ENCODE measurements at regions of chr17 and their contacts with region 1.

Region 1: GRCh38 chr17:9158544-9159452 is 137.5 kb downstream of the NTN1 start:
- DNase-seq: no peak
- H3K4me3 ChIP-seq: no peak overlapping the region
- H3K27ac ChIP-seq: no peak overlapping the region
- H3K4me1 ChIP-seq: no peaks in the 10 kb centered on the region
- H3K27me3 ChIP-seq: no peaks in the 10 kb centered on the region
- CTCF ChIP-seq: no peak

Region 2: DNA sequence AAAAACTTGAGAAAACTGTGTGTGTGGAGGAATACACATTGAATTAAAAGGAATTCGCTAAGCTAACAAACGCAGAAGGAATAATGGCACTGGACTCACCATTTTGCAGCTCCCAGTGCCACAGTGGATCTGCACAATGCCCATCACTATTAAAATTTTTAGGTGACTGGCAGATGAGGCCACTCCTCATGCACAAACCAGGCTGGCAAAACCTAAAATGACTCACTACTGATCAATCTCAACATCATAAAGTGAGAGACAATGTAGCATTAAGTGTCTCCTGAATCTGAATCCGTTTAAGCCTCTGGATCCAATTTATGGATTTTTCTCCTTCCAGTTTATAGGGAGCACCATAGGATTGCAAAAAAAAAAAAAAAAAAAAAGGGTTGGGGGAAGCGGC is 548.9 kb before region 1 on chr17:
- CTCF ChIA-PET with region 1: interaction called, 11 read pairs
- POLR2A ChIA-PET with region 1: no interaction called
- intact Hi-C with region 1: no loop called
- DNase-seq: no peak
- H3K4me3 ChIP-seq: no peak overlapping the region
- H3K27ac ChIP-seq: no peak overlapping the region
- H3K4me1 ChIP-seq: peaks cover 23% of the 10 kb centered on the region
- H3K27me3 ChIP-seq: no peaks in the 10 kb centered on the region
- CTCF ChIP-seq: no peak

Measured in A673 (cell line).